Activated CD4-positive, alpha-beta T cell treated with anti-CD3 and anti-CD28 coated beads, Interleukin-2, amount 10 ng/mL, durations not matched to agents 24 days and 14 days (primary cell): ENCODE measurements at regions of chr18 and their contacts with region 1.

Region 1: GRCh38 chr18:34787931-34788532 is 77.9 kb downstream of the DTNA start:
- DNase-seq: peak; percentile 76
- H3K4me3 Mint-ChIP-seq: no peak overlapping the region
- H3K27ac Mint-ChIP-seq: no peak overlapping the region
- H3K4me1 Mint-ChIP-seq: peaks cover 5% of the 10 kb centered on the region
- H3K27me3 Mint-ChIP-seq: peaks cover 7% of the 10 kb centered on the region

Region 2: GRCh38 chr18:33231474-33232317 is 1556.3 kb before region 1 on chr18:
- intact Hi-C with region 1: loop called (anchors 5 kb)
- DNase-seq: peak; percentile 88
- H3K4me3 Mint-ChIP-seq: no peak overlapping the region
- H3K27ac Mint-ChIP-seq: no peak overlapping the region
- H3K4me1 Mint-ChIP-seq: no peaks in the 10 kb centered on the region
- H3K27me3 Mint-ChIP-seq: no peaks in the 10 kb centered on the region

Region 3: DNA sequence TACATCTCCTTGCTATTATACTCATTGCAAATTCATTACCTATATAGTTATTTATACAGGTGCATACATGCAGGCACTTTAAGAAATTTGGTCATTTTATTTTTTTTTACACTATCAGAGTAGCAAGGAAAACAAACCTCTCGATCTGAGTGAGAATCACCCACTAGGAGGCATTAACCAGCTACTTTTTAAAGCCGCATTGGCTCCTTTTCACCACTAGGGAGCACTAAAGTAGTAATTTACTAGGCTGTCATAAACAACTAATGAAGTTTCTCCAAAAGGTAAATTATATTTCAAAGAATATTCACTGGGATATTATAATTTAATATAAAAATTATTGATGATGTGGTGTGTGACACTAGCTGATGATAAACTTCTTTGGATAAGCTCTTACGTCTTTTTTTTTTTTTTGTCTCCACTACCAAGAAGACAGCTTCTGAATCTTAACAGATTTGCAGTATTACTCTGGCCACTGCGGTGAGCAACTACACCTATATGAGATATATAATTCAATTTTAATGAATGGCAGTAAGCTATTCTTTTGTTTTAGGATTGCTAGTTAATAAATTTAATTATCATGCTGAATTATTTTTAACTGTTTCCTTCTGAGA is 665.2 kb before region 1 on chr18:
- intact Hi-C with region 1: loop called (anchors 5 kb)
- DNase-seq: peak; percentile 67
- H3K4me3 Mint-ChIP-seq: no peak overlapping the region
- H3K27ac Mint-ChIP-seq: no peak overlapping the region
- H3K4me1 Mint-ChIP-seq: no peaks in the 10 kb centered on the region
- H3K27me3 Mint-ChIP-seq: no peaks in the 10 kb centered on the region

Region 4: DNA sequence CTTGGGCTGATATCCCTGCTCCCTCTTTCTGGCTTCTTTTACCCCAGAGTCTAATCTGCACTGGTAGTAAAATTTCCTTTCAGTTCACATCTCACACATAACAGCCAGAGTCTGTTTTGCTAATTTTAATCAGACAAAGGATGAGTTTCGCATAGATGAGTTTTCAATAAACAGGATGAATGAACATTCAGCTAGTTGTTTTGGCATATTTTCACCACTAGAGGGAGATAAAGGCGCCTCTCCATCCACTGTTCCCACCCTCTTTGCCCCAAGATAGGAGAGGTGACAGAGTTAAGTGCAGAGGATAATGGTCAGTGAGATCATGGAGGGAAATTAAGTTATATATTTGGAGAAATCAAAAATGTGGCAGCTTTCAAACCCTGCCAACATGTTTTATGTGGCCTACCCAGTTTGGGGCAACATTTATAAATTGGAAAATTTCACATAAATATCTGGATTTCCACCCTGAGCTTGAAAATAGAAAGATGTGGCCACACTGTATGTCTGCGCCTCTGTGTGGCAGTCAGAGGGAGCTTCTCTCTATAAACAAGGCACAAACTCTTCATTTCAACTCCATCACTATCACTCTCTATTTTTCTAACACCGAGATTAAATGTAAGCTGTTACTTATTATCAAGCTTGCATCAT is 126.4 kb before region 1 on chr18:
- intact Hi-C with region 1: loop called (anchors 1 kb)
- DNase-seq: peak; percentile 60
- H3K4me3 Mint-ChIP-seq: no peak overlapping the region
- H3K27ac Mint-ChIP-seq: no peak overlapping the region
- H3K4me1 Mint-ChIP-seq: no peaks in the 10 kb centered on the region
- H3K27me3 Mint-ChIP-seq: peaks cover 19% of the 10 kb centered on the region